ENCODE measurements at regions of chr15 and their contacts with region 1.

Region 1: DNA sequence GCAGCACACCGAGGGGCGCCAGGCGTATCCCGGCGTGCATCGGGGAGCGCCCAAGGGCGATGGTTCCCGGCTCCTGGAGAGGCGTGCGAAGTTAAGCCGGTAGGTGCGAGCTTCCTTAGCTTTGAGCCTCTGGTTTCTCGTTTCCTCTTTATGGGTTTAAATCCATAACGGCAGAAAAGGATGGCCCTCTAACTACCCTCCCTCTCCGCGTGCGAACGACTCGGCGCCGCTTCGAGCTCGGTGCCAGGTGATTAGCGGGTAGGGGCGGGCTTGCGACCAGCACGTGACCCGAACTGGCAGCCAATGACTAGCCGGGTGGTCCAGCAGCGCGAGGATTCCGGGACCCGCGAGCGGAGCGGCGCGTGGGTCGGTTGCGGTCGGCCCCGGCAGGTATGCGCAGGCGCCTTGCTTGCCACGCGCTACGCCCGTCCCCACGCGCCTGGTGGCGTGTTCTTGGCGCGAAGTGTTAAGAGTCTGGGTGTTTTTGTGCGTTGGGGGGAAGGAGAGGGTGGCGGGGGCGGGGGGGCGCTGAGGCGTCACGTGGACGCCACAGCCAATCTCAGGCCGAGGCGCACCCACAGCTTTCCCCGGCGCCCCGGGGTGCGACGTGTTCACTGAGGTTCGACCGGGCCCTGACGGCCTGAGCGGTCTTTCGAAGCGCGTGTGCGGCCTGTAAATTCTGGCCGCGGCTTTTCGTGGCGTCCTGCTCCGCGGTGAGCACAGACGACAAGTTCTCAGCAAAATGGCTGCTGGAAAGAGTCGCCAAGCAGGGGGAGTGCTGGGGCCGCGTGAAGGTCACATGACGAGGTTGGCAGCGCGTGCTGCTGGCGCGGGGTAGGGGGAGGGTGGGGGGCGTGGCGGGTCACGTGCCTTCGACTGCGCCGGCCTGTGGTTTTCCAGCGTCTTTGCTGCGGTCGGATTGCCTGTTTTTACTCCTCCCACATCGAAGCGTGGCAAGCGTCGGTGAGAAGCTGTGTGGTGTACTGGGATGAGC is 38.7 kb upstream of the MGA start:
- DNase-seq: peak; percentile 88

Region 2: DNA sequence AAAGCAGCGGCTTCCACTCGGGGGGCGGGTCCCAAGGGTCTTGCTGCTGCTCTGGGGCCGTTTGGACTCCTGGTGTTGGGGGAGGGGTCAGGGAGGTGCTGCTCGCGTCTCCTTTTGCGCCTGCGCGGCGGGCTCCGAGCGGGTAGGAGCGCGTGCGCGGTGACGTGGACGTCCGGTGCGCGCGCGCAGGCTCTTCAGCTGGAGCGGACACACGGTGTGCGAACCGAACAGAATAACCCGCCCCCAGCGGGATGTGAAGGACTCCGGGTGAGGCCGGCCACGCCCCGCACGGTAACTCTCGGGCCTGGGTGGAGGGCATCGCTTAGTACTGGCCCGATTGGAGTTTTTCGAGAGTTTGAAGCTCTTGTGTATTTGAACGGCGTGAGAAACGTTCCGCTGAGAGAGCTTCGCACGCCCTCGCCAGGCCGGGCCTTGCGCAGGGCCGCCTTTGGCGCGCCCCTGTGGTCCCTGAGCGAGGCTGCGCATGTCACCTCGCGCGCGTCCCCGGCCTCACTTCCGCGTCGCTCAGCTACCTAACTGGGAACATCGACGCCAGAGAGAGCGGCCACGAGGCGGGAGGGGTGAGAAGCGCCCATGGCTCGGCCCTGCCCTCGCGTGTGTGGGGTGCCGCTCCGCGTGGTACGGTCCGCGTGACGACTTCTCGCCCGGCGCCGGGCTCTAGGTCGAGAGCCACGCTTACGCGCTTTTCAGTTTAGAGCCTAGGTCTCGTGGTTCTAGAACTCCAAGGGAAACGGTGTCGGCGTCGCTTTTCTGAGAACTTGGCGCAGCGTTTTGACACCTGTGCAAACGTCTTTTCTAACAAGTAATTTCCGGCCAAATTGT is 39.0 kb after region 1 on chr15 and contains the start of gene MGA:
- intact Hi-C with region 1: loop called (anchors 2 kb)
- DNase-seq: peak; percentile 94
- total RNA-seq, gene MGA: 37.3 TPM

Region 3: GRCh38 chr15:41671656-41672648 is 50.5 kb after region 1 on chr15:
- intact Hi-C with region 1: no loop called
- DNase-seq: no peak